ENCODE measurements at regions of chr7 and their contacts with region 1.

Region 1: GRCh38 chr7:149125863-149126661 is at the start of gene ZNF425:
- DNase-seq: peak; percentile 95
- H3K4me3 ChIP-seq: peak within 1 kb of the TSS; percentile 87 to 99 (median 90)
- H3K27ac ChIP-seq: peak within 1 kb of the TSS; percentile 96 to 99 (median 97)
- H3K4me1 ChIP-seq: peaks cover 0 to 17% (median 13%) of the 10 kb centered on the region in 4 donors
- H3K27me3 ChIP-seq: no peaks in the 10 kb centered on the region
- CTCF ChIP-seq: peak; percentile 90 to 98 (median 96)
- EP300 ChIP-seq: no peak
- POLR2A ChIP-seq: peak; percentile 87 to 90
- total RNA-seq, gene ZNF425: 2.9 to 4.9 (median 3.6) TPM

Region 2: DNA sequence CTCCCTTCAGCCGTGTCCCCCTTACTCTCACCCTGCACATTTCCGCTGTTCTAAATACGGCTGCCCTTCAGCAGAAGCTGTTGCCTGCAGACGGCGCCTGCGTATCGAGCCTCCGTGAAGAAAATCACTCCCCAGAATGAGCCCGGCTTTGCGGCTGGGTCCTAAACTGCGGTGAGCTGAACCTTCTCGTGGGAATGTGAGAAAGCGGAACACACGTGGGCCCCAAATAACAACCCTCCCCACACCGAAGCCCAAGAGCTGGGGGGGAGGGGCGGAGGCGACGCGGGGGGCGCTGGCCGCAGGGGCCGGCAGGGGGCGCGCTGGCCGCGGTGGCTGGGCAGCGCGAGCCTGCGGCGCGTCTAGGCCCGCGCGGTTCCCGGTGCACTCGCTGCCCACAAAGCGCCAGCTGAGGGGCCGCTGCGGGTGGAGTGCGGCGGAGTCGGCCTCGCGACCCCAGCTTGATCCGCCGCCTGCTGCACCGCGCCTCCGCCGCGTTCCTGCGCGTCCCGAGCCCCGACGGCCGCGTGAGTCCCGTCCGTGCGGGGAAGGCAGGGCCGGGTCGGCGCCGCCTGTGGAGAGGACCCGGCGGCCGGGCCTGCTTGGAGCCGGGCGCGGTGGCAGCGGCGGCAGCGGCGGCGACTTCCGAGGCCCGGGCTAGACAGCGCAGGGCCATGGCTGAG is 21.1 kb after region 1 on chr7 and contains the start of gene ZNF398:
- intact Hi-C with region 1: loop called (anchors 1 kb)
- DNase-seq: peak; percentile 77
- H3K4me3 ChIP-seq: peak within 1 kb of the TSS; percentile 72 to 92 (median 84)
- H3K27ac ChIP-seq: peak within 1 kb of the TSS; percentile 89 to 94 (median 92)
- H3K4me1 ChIP-seq: peaks cover 0 to 31% (median 21%) of the 10 kb centered on the region in 4 donors
- H3K27me3 ChIP-seq: no peaks in the 10 kb centered on the region
- CTCF ChIP-seq: peak; percentile 21 to 84 (median 31)
- EP300 ChIP-seq: no peak
- POLR2A ChIP-seq: no peak
- total RNA-seq, gene ZNF398: 13.0 to 19.7 (median 18.4) TPM